ENCODE measurements at regions of chr4 and their contacts with region 1.

Region 1: DNA sequence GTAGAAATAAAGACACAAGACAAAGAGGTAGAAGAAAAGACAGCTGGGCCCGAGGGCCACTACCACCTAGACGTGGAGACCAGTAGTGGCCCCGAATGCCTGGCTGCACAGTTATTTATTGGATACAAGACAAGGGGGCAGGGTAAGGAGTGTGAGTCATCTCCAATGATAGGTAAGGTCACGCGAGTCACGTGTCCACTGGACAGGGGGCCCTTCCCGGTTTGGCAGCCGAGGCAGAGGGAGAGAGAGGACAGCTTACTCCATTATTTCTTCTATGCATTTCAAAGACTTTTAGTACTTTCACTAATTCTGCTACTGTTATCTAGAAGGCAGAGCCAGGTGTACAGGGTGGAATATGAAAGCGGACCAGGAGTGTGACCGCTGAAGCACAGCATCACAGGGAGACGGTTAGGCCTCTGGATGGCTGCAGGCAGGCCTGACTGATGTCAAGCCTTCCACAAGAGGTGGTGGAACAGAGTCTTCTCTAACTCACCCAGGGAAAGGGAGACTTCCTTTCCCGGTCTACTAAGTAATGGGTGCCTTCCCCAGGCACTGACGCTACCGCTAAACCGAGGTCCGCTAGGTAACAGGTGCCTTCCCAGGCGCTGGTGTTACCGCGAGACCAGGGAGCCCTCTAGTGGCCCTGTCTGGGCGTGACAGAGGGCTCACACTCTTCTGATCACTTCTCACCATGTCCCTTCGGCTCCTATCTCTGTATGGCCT is 44.9 kb downstream of the ZBTB49 start:
- DNase-seq: peak; percentile 42 to 82 (median 60)
- H3K4me3 ChIP-seq: peak overlapping the region in 1 of 3 donors; percentile 28
- H3K27ac ChIP-seq: no peak overlapping the region
- H3K4me1 ChIP-seq: peaks cover 0 to 2% (median 0%) of the 10 kb centered on the region in 3 donors
- H3K27me3 ChIP-seq: no peaks in the 10 kb centered on the region
- CTCF ChIP-seq: peak; percentile 59

Region 2: GRCh38 chr4:4256799-4257198 is 78.2 kb before region 1 on chr4:
- intact Hi-C with region 1: loop called (anchors 5 kb)
- DNase-seq: no peak
- H3K4me3 ChIP-seq: no peak overlapping the region
- H3K27ac ChIP-seq: no peak overlapping the region
- H3K4me1 ChIP-seq: peaks cover 0 to 5% (median 0%) of the 10 kb centered on the region in 3 donors
- H3K27me3 ChIP-seq: no peaks in the 10 kb centered on the region
- CTCF ChIP-seq: no peak

Region 3: DNA sequence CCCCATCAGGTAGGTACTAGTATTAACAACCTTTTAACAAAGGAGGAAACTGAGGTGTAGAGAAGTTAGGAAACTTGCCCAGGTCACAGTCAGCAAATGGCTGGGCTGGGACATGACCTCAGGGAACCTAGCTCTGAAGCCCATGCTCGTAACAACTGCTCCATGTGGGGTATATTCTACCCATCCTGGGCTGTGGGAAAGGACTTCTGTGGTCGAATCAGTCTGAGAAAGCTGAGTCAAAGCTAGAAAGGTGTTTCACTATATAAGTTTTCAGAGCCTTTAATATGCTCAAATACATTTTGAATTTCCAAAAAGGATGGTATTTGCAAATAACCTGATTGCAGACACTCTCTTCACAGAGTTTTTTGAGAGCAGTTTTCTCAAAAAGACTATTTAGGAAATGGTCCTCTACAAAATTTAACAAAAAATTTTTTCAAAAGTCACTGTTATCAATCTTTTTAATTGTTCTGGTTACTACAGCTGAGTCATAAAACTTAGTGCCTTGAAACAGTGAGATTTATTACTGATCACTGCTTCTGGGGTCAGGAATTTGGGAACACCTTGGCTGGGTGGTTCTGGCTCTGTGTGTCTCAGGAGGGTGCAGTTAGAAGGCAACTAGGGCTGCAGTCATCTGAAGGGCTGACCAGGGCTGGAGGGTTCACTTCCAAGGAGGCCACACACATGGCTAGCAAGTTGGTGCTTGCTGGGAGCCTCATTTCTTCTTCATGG is 105.5 kb after region 1 on chr4:
- intact Hi-C with region 1: no loop called
- DNase-seq: no peak
- H3K4me3 ChIP-seq: no peak overlapping the region
- H3K27ac ChIP-seq: no peak overlapping the region
- H3K4me1 ChIP-seq: no peaks in the 10 kb centered on the region
- H3K27me3 ChIP-seq: no peaks in the 10 kb centered on the region
- CTCF ChIP-seq: no peak

Region 4: DNA sequence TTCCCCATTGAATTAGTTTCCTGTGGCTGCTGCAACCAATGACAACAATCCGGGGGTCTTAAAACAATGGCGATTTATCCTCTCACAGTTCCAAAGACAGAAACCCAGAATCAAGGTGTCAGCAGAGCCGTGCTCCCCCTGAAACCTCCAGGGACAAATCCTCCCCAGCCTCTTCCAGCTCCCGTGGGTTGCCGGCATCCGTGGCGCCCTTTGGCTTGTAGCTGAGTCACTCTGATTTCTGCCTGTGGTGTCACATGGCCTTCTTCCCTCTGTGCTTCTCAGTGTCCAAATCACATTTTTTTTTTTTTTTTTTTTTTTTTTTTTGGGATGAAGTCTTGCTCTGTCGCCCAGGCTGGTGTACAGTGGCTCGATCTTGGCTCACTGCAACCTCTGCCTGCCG is 271.4 kb after region 1 on chr4:
- intact Hi-C with region 1: no loop called
- DNase-seq: no peak
- H3K4me3 ChIP-seq: no peak overlapping the region
- H3K27ac ChIP-seq: no peak overlapping the region
- H3K4me1 ChIP-seq: no peaks in the 10 kb centered on the region
- H3K27me3 ChIP-seq: no peaks in the 10 kb centered on the region
- CTCF ChIP-seq: no peak